GM23248 (cell line): ENCODE measurements at regions of chr16 and their contacts with region 1.

Region 1: GRCh38 chr16:56356276-56357240 is 68.8 kb downstream of the AMFR start:
- DNase-seq: peak; percentile 94
- H3K4me3 ChIP-seq: peak overlapping the region; percentile 78
- H3K27ac ChIP-seq: peak overlapping the region; percentile 81
- H3K4me1 ChIP-seq: peaks cover 9% of the 10 kb centered on the region; the same call in 1 of the 2 replicates
- H3K27me3 ChIP-seq: no peaks in the 10 kb centered on the region

Region 2: DNA sequence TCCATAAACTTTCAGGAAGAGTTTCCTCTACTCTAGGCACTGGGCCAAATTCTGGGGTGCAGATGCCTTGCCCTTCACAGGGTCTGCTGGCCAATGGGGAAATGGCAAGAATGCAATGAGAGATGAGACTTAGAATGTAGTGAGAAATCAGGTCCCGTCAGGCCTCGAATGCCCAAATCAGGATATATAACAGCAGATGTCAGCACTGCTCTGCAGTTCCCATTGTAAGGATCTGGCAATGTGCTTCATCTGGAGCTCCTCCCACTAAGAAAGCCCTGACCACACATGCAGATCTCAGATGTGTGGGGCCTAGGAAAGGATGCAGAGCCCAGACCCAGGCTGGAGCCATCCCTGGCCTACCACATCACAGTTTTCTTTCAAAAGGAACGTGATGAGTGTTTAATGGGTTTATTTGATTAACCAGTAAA is 861.5 kb before region 1 on chr16:
- in situ Hi-C with region 1: loop called (anchors 25 kb)
- DNase-seq: peak; percentile 93
- H3K4me3 ChIP-seq: no peak overlapping the region
- H3K27ac ChIP-seq: peak overlapping the region; percentile 96
- H3K4me1 ChIP-seq: peaks cover 66% of the 10 kb centered on the region
- H3K27me3 ChIP-seq: no peaks in the 10 kb centered on the region

Region 3: GRCh38 chr16:55605754-55606336 is 750.7 kb before region 1 on chr16:
- in situ Hi-C with region 1: no loop called
- DNase-seq: peak; percentile 26
- H3K4me3 ChIP-seq: no peak overlapping the region
- H3K27ac ChIP-seq: no peak overlapping the region
- H3K4me1 ChIP-seq: no peaks in the 10 kb centered on the region
- H3K27me3 ChIP-seq: no peaks in the 10 kb centered on the region